CD4-positive, alpha-beta T cell (primary cell): ENCODE measurements at regions of chr18 and their contacts with region 1.

Region 1: GRCh38 chr18:46281185-46282176 is 177.3 kb downstream of the HAUS1 start:
- DNase-seq: peak; percentile 16 to 71 (median 46)
- ATAC-seq: peak; percentile 93
- H3K4me3 ChIP-seq: no peak overlapping the region
- H3K4me3 Mint-ChIP-seq: no peak overlapping the region
- H3K27ac ChIP-seq: no peak overlapping the region
- H3K27ac Mint-ChIP-seq: no peak overlapping the region
- H3K4me1 ChIP-seq: peaks cover 4% of the 10 kb centered on the region
- H3K4me1 Mint-ChIP-seq: peaks cover 16% of the 10 kb centered on the region
- H3K27me3 ChIP-seq: no peaks in the 10 kb centered on the region
- H3K27me3 Mint-ChIP-seq: no peaks in the 10 kb centered on the region
- CTCF ChIP-seq: peak; percentile 77

Region 2: GRCh38 chr18:46301081-46301480 is 19.6 kb after region 1 on chr18:
- CTCF ChIA-PET with region 1: no interaction called
- POLR2A ChIA-PET with region 1: no interaction called
- intact Hi-C with region 1: no loop called
- DNase-seq: no peak
- ATAC-seq: no peak
- H3K4me3 ChIP-seq: no peak overlapping the region
- H3K4me3 Mint-ChIP-seq: no peak overlapping the region
- H3K27ac ChIP-seq: no peak overlapping the region
- H3K27ac Mint-ChIP-seq: no peak overlapping the region
- H3K4me1 ChIP-seq: no peaks in the 10 kb centered on the region
- H3K4me1 Mint-ChIP-seq: no peaks in the 10 kb centered on the region
- H3K27me3 ChIP-seq: peaks cover 0 to 4% of the 10 kb centered on the region in 2 experiments
- H3K27me3 Mint-ChIP-seq: no peaks in the 10 kb centered on the region
- CTCF ChIP-seq: no peak

Region 3: DNA sequence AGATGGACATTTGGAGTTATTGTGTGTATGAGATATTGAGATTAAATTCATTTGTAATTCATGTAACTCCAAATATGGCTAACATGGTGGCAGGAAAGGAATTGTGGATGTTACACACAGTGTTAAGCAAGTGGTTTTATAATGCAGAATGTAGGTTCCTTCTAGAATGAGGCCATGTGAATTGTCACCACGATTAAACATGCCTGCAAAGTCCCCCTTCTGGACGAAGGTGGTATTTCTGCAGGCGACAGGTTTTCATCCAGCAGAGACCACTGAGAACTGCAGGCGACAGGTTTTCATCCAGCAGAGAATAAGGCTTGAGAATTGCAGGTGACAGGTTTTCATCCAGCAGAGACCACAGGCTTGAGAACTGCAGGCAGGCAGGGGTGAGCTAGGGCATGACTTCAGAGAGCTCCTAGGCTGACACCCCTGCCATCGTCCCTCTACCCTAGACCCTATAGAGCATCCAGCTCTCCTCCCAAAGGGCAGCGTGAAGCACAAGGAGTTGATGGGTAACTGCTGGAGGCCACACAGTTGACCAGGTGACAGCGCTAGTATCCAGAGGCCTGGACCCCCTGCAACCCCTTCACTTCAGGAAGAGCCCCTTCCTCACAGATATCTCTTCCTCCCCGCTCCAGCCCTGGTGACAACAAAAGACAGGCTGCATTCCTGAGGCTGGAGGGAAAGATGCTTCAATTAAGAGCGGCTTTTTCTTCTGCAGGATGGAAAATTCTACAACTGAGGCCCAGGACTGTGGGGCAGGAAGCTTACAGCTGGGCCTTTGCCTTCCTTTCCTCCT is 199.8 kb after region 1 on chr18:
- CTCF ChIA-PET with region 1: interaction called, 4 read pairs
- POLR2A ChIA-PET with region 1: no interaction called
- intact Hi-C with region 1: loop called in 1 of 2 experiments (anchors 10 kb)
- DNase-seq: peak; percentile 24 to 68 (median 48)
- ATAC-seq: peak; percentile 61
- H3K4me3 ChIP-seq: no peak overlapping the region
- H3K4me3 Mint-ChIP-seq: no peak overlapping the region
- H3K27ac ChIP-seq: no peak overlapping the region
- H3K27ac Mint-ChIP-seq: no peak overlapping the region
- H3K4me1 ChIP-seq: no peaks in the 10 kb centered on the region
- H3K4me1 Mint-ChIP-seq: no peaks in the 10 kb centered on the region
- H3K27me3 ChIP-seq: peaks cover 0 to 5% of the 10 kb centered on the region in 2 experiments
- H3K27me3 Mint-ChIP-seq: peaks cover 22% of the 10 kb centered on the region
- CTCF ChIP-seq: peak; percentile 65

Region 4: DNA sequence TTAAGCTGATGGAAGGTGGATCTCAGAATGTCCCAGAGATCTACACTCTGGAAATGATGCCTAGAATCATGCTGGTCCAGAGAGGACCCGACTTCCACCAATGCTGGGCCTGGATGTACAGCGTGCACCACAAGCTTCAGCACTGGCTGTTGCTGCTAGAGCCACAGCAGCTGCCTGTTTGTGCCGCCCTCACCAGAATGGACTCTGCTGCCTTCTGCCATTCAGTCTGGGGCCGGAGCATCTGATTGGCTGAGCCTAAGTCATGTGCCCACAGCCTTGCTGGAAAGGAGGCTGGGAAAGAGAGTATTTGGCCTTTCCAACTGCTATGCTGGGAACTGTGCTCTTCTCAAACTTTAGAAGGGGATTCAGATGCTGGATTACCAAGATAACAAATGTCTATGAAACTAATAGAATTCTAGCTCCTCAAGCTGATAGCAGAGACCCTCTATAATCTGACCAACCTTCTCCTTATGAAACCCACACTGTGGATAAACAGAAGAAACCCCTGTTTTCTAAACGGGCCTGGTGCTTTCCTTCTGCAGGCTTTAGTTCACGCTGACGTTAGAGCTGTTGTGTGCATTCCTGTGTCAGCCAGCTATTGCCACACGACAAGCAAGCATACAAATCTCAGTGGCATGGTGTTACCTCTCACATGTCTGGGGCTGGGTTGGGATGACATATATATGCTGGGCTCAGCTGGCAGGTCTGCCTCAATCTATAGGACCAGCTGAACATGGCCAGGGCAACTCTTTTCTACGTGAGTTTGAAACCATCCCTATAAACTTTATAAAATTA is 379.7 kb after region 1 on chr18:
- CTCF ChIA-PET with region 1: interaction called, 7 read pairs
- POLR2A ChIA-PET with region 1: interaction called, 6 read pairs
- intact Hi-C with region 1: loop called (anchors 1 to 2 kb)
- DNase-seq: no peak
- ATAC-seq: no peak
- H3K4me3 ChIP-seq: no peak overlapping the region
- H3K4me3 Mint-ChIP-seq: no peak overlapping the region
- H3K27ac ChIP-seq: no peak overlapping the region
- H3K27ac Mint-ChIP-seq: no peak overlapping the region
- H3K4me1 ChIP-seq: peaks cover 3% of the 10 kb centered on the region
- H3K4me1 Mint-ChIP-seq: no peaks in the 10 kb centered on the region
- H3K27me3 ChIP-seq: no peaks in the 10 kb centered on the region
- H3K27me3 Mint-ChIP-seq: no peaks in the 10 kb centered on the region
- CTCF ChIP-seq: no peak